ENCODE measurements at regions of chr6 and their contacts with region 1.

Region 1: GRCh38 chr6:20056350-20056992 is 155.8 kb downstream of the MBOAT1 start:
- DNase-seq: no peak
- H3K4me3 ChIP-seq: no peak overlapping the region
- H3K27ac ChIP-seq: no peak overlapping the region
- H3K4me1 ChIP-seq: no peaks in the 10 kb centered on the region
- H3K27me3 ChIP-seq: no peaks in the 10 kb centered on the region
- CTCF ChIP-seq: peak; percentile 20 to 42 (median 36)
- EP300 ChIP-seq: no peak
- POLR2A ChIP-seq: no peak

Region 2: DNA sequence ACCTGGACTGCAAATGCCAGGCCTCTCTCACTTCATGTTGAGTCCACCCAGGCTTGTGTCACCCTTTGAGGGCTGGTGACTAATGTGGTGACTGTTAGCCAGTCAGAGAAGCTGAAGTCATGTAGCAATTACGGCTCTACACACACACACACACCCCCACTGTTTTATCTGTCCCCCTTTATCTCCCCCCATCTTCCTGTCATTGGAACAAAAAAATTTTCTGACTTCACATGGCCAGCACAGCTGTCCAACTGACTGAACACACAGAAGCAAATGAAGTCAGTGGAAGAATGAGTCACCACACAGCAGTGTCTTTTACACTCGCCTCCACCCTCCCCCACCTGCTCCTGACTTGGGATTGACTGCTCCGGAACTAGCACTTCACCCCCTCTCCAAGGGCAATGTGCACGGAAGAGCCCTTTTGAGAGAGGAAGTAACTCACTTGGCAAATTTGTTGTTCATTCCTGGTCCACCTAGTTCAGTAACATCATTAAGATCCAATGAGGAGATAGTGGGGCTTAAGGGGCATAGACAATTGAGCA is 1471.4 kb before region 1 on chr6:
- in situ Hi-C with region 1: loop called in 2 of 4 experiments (anchors 10 to 25 kb)
- intact Hi-C with region 1: no loop called
- DNase-seq: peak; percentile 60
- H3K4me3 ChIP-seq: no peak overlapping the region
- H3K27ac ChIP-seq: no peak overlapping the region
- H3K4me1 ChIP-seq: peaks cover 0 to 6% (median 2%) of the 10 kb centered on the region in 4 donors
- H3K27me3 ChIP-seq: no peaks in the 10 kb centered on the region
- CTCF ChIP-seq: no peak
- EP300 ChIP-seq: no peak
- POLR2A ChIP-seq: no peak

Region 3: GRCh38 chr6:18595774-18596530 is 1460.5 kb before region 1 on chr6:
- in situ Hi-C with region 1: loop called in 1 of 4 experiments (anchors 25 kb)
- intact Hi-C with region 1: no loop called
- DNase-seq: peak; percentile 48
- H3K4me3 ChIP-seq: no peak overlapping the region
- H3K27ac ChIP-seq: peak overlapping the region in 2 of 4 donors; percentile 13 to 39
- H3K4me1 ChIP-seq: peaks cover 0 to 12% (median 6%) of the 10 kb centered on the region in 4 donors
- H3K27me3 ChIP-seq: no peaks in the 10 kb centered on the region
- CTCF ChIP-seq: peak; percentile 70 to 92 (median 89)
- EP300 ChIP-seq: no peak
- POLR2A ChIP-seq: no peak

Measured in transverse colon (tissue), 4 donors.